Cardiac septum (tissue), 1 donor: ENCODE measurements at regions of chr15 and their contacts with region 1.

Region 1: GRCh38 chr15:37900326-37901221 is 33.9 kb upstream of the TMCO5A start:
- DNase-seq: no peak

Region 2: DNA sequence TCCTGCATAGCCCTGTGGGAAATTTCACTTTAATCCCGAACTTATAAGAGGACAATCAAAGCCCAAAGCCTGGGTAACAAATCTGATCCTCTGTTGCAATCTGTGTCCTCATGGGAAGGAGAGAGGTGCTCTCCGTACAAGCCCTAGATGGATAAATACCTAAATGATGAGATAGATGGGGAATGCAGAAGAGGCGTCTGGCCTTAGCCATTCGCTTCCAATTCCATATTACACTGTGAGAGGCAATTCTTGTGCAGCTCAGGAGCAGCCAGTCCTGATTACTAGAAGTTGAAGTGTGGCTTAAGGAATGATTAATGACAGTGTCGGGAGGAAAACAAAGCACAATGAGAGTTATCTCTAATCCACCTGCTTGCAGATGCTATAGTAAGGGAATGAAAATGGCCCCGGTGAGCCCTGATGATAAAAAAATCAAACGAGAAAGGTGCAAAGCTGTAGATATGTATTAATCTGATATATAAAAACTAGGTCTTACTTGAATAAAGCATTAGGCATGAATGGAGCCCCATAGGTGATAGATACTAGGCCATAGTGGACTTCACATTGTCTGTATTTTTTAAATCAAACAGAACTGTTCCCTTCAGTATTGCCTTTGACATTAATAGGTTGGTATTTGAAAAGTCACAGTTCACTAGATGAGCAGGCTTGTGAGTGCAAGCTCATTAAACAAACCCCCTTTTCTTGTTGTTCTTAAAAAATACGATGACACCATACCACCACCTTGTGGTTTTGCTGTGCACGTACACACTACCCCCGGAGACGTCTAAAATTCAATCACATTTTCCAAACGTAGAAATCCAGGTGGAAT is 20.4 kb before region 1 on chr15:
- intact Hi-C with region 1: loop called (anchors 2 kb)
- DNase-seq: no peak